Esophagus squamous epithelium (tissue), 5 donors: ENCODE measurements at regions of chr12 and their contacts with region 1.

Region 1: DNA sequence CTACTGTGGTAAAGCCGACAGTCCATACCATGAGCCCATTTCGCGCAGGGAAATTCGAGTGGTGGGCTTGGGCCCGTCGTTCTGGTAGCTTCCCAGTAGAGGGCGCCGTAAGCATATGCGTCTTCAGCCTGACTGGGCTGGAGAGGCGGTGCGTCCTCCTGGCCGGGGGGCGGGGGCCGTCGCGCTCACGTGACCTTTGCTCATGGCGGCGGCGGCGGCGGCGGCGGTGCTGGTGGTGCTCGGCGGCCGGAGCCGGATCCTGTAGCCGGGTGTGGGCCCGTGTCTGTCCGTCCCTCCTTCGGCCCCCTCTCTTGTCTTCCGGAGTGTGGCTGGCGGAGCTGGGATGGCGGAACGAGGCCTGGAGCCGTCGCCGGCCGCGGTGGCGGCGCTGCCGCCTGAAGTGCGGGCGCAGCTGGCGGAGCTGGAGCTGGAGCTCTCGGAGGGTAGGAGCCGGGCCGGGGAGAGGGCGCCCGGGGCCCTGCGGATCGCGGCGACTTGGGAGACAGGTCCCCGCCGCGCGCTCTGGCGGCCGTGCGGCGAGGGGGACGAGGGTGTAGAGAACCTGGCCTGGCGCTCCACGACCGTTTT is at the start of gene DIP2B:
- DNase-seq: peak; percentile 80
- H3K4me3 ChIP-seq: peak within 1 kb of the TSS; percentile 71 to 98 (median 85)
- H3K27ac ChIP-seq: peak within 1 kb of the TSS; percentile 93 to 98 (median 96)
- H3K4me1 ChIP-seq: peaks cover 32 to 52% (median 38%) of the 10 kb centered on the region in 3 donors
- H3K27me3 ChIP-seq: no peaks in the 10 kb centered on the region
- CTCF ChIP-seq: peak; percentile 88 to 99 (median 97)
- POLR2A ChIP-seq: peak in 2 of 4 donors; percentile 45 to 68
- total RNA-seq, gene DIP2B: 31.1 to 57.2 (median 46.5) TPM

Region 2: GRCh38 chr12:50637870-50638481 is 133.1 kb after region 1 on chr12:
- intact Hi-C with region 1: loop called (anchors 5 kb)
- DNase-seq: no peak
- H3K4me3 ChIP-seq: no peak overlapping the region
- H3K27ac ChIP-seq: peak overlapping the region in 1 of 4 donors; percentile 50
- H3K4me1 ChIP-seq: peaks cover 10 to 67% (median 18%) of the 10 kb centered on the region in 3 donors
- H3K27me3 ChIP-seq: no peaks in the 10 kb centered on the region
- CTCF ChIP-seq: peak in 5 of 6 experiments; percentile 45 to 74 (median 69)
- POLR2A ChIP-seq: no peak